Activated CD8-positive, alpha-beta T cell treated with anti-CD3 and anti-CD28 coated beads, Interleukin-2, amount 10 ng/mL, durations not matched to agents 7 days and 5 days (primary cell): ENCODE measurements at regions of chr10 and their contacts with region 1.

Region 1: GRCh38 chr10:109883859-109884771 is 39.2 kb downstream of the XPNPEP1 start:
- DNase-seq: peak; percentile 67
- ATAC-seq: peak; percentile 78
- H3K4me3 Mint-ChIP-seq: no peak overlapping the region
- H3K27ac Mint-ChIP-seq: peak overlapping the region; percentile 64
- H3K4me1 Mint-ChIP-seq: peaks cover 23% of the 10 kb centered on the region
- H3K27me3 Mint-ChIP-seq: no peaks in the 10 kb centered on the region

Region 2: DNA sequence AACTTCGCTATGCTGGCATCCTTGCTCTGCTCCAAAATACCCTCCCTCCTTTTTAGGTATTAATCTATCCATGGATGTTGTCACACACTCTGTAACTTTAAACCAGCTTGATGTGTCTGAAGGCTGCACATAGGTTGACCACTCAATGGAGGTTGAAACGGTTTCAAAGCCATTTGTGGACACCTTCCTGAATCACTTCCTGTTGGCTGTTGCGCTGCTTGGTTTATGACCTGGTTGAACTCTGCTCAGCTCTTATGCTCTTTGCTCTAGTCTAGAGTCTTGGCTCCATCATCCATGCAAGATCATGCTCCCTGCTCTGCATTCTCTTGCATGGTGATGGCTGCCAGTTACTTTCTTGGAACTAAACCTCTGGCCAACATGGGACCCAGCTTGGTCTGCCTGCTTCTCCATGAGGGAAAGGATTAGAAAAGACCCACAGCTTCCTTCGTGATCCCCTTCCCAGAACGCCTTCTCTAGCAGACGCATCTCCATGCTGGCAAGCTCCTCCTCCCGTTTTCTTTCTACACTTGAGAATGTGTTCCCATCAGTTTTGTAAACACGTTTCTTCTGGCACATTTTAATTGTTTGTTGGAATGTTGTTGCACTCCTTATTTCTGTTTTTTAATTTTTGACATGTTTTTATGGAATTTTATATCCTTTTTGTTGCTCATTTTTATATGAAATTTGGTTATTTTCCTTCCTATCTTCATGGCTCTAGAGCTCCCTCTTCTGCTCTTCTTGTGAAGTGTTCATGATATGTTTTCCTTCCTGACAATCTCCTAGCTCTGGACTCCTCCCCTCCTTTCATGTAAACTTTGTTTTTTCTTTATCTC is 110.6 kb before region 1 on chr10:
- CTCF ChIA-PET with region 1: no interaction called
- POLR2A ChIA-PET with region 1: no interaction called
- DNase-seq: no peak
- ATAC-seq: no peak
- H3K4me3 Mint-ChIP-seq: no peak overlapping the region
- H3K27ac Mint-ChIP-seq: no peak overlapping the region
- H3K4me1 Mint-ChIP-seq: no peaks in the 10 kb centered on the region
- H3K27me3 Mint-ChIP-seq: no peaks in the 10 kb centered on the region

Region 3: DNA sequence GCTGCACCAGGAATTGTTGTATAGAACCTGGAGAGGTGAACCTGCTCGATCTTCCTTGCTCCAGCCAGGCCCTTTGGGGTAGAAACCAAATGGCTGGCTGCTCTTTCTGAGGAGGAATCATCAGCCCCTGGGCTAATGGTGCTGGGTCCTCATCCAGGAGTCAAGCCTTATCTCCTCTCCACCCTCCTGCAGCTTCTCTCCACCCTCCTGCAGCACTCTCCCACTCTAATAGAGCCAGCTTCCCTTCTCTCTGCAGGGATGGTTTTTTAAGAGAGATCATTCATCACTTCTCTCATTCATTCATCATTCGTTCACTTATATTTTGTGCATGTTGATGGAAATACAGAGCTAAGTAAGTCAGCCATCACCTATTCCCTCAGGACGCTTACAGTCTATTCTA is 64.3 kb before region 1 on chr10:
- CTCF ChIA-PET with region 1: no interaction called
- POLR2A ChIA-PET with region 1: no interaction called
- DNase-seq: no peak
- ATAC-seq: no peak
- H3K4me3 Mint-ChIP-seq: no peak overlapping the region
- H3K27ac Mint-ChIP-seq: no peak overlapping the region
- H3K4me1 Mint-ChIP-seq: no peaks in the 10 kb centered on the region
- H3K27me3 Mint-ChIP-seq: no peaks in the 10 kb centered on the region

Region 4: DNA sequence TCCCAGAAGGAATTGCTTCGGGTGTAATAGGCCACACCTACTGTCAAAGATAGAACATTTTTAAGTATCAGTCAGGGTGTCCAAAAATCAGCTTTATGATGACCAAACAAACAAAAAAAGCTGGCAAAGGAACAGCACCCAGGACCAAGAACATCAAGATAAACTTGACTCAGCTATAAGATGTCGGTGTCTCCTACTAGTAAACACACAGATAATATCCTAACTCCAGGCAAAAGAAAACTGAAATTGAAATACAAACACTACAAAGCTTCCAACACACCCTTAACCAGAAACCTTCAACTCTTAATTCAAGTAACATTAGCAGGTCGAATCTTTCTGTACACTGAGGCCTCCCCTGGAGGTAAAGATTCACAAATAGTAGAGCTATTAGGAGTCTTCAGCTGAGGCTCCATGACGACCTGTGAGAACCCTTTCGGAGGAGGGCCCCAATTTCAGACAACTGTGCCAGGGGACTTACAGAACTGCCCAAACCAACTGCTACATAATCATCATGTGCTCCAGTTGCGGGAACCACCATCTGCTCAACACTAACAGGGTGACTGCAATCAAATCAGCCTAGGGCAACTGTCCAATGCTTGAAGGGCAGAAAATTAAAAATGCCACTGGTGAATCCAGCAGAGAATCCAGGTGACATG is 18.9 kb after region 1 on chr10:
- CTCF ChIA-PET with region 1: interaction called, 30 read pairs
- POLR2A ChIA-PET with region 1: interaction called, 3 read pairs
- DNase-seq: no peak
- ATAC-seq: peak; percentile 88
- H3K4me3 Mint-ChIP-seq: peak overlapping the region; percentile 49
- H3K27ac Mint-ChIP-seq: peak overlapping the region; percentile 76
- H3K4me1 Mint-ChIP-seq: peaks cover 64% of the 10 kb centered on the region
- H3K27me3 Mint-ChIP-seq: no peaks in the 10 kb centered on the region

Region 5: GRCh38 chr10:109934958-109935706 is 51.0 kb after region 1 on chr10:
- CTCF ChIA-PET with region 1: interaction called, 17 read pairs
- POLR2A ChIA-PET with region 1: interaction called, 5 read pairs
- DNase-seq: peak; percentile 36
- ATAC-seq: peak; percentile 66
- H3K4me3 Mint-ChIP-seq: peak overlapping the region; percentile 70
- H3K27ac Mint-ChIP-seq: peak overlapping the region; percentile 94
- H3K4me1 Mint-ChIP-seq: peaks cover 36% of the 10 kb centered on the region
- H3K27me3 Mint-ChIP-seq: no peaks in the 10 kb centered on the region

Region 6: DNA sequence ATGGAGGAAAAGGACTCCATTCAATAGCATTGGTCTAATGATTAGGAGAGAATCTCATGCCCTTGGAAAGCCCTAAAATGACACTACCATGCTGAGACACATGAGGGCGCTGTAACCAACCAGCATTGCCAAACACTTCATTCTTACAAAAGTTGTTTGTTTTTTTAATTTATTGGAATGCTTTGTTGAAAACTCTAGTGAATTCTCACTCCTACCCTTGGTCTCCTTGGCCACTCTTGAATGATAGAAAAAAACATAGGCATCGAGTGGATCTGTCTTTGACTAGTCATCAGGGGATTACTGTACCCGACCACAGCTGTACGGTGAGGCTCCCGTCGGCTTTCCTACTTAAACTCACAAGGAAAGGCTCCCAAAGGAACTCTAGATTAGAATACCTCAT is 94.4 kb after region 1 on chr10:
- CTCF ChIA-PET with region 1: interaction called, 53 read pairs
- POLR2A ChIA-PET with region 1: no interaction called
- DNase-seq: peak; percentile 73
- ATAC-seq: peak; percentile 36
- H3K4me3 Mint-ChIP-seq: no peak overlapping the region
- H3K27ac Mint-ChIP-seq: no peak overlapping the region
- H3K4me1 Mint-ChIP-seq: no peaks in the 10 kb centered on the region
- H3K27me3 Mint-ChIP-seq: peaks cover 3% of the 10 kb centered on the region

Region 7: GRCh38 chr10:110016039-110016438 is 131.9 kb after region 1 on chr10:
- CTCF ChIA-PET with region 1: interaction called, 14 read pairs
- POLR2A ChIA-PET with region 1: no interaction called
- DNase-seq: no peak
- ATAC-seq: no peak
- H3K4me3 Mint-ChIP-seq: no peak overlapping the region
- H3K27ac Mint-ChIP-seq: no peak overlapping the region
- H3K4me1 Mint-ChIP-seq: peaks cover 55% of the 10 kb centered on the region
- H3K27me3 Mint-ChIP-seq: no peaks in the 10 kb centered on the region

Region 8: GRCh38 chr10:110279407-110279986 is 395.4 kb after region 1 on chr10:
- CTCF ChIA-PET with region 1: interaction called, 13 read pairs
- POLR2A ChIA-PET with region 1: no interaction called
- DNase-seq: peak; percentile 58
- ATAC-seq: peak; percentile 53
- H3K4me3 Mint-ChIP-seq: no peak overlapping the region
- H3K27ac Mint-ChIP-seq: no peak overlapping the region
- H3K4me1 Mint-ChIP-seq: peaks cover 17% of the 10 kb centered on the region
- H3K27me3 Mint-ChIP-seq: peaks cover 19% of the 10 kb centered on the region